Spleen (tissue), 13 donors: ENCODE measurements at regions of chr1 and their contacts with region 1.

Region 1: DNA sequence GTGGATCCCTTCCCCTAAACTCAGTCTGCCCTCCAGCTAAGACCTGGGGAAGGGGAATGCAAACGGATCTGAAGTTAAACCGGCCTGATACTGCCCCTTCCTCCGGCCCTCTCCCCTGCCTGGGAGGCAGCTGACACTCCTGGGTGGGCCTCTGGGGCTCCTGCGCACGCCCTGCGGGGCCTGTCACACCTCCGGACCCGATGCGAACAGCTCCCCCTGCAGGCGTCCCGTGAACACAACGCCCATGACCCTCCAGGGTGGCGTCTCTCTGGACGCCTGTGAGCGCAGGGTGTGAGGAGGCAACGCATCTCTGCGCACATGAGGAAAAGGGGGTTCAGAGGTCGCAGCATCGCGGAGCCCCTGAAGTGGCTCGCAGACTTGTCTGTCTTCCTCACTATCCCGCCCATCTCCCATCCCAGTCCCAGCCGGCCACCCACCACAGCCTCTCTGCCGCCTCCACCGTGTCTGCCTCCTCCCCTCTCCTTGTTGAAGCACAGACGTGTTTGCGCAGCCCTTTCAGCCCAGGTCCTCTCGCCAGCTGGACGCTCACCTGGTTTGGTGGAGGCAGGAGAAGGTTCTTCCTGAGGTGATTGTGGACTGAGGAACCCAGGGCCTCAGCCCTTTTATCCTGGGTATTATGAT is 421 bp upstream of the LCE3A start:
- DNase-seq: no peak
- H3K4me3 ChIP-seq: no peak overlapping the region
- H3K27ac ChIP-seq: no peak overlapping the region
- H3K4me1 ChIP-seq: no peaks in the 10 kb centered on the region
- H3K27me3 ChIP-seq: peaks cover 0 to 38% (median 0%) of the 10 kb centered on the region in 7 donors
- CTCF ChIP-seq: no peak
- POLR2A ChIP-seq: no peak

Region 2: DNA sequence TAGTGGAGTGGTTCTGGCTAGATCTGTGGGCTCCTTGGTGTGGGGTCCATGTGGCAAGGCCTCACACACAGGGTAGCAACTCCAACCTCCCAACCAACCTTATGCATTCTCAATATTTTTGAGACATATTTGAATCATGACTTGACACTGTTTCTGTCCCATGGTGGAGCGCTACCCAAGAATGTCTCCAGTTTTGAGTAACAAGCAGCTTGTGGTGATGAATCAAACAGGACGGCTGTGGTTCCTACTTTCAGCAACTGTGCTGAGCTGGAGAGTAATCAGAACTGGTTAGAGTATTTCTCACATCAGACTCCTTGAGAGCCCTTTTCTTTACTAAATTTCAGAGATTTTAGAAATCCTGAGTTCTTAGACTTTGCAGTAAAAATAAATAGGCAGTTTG is 46.2 kb before region 1 on chr1:
- intact Hi-C with region 1: loop called (anchors 5 kb)
- DNase-seq: no peak
- H3K4me3 ChIP-seq: no peak overlapping the region
- H3K27ac ChIP-seq: no peak overlapping the region
- H3K4me1 ChIP-seq: no peaks in the 10 kb centered on the region
- H3K27me3 ChIP-seq: peaks cover 0 to 29% (median 0%) of the 10 kb centered on the region in 7 donors
- CTCF ChIP-seq: no peak
- POLR2A ChIP-seq: no peak

Region 3: GRCh38 chr1:152735648-152736047 is 112.3 kb after region 1 on chr1:
- intact Hi-C with region 1: no loop called
- DNase-seq: no peak
- H3K4me3 ChIP-seq: no peak overlapping the region
- H3K27ac ChIP-seq: no peak overlapping the region
- H3K4me1 ChIP-seq: no peaks in the 10 kb centered on the region
- H3K27me3 ChIP-seq: peaks cover 0 to 29% (median 0%) of the 10 kb centered on the region in 7 donors
- CTCF ChIP-seq: no peak
- POLR2A ChIP-seq: no peak